ENCODE measurements at regions of chr6 and their contacts with region 1.

Region 1: DNA sequence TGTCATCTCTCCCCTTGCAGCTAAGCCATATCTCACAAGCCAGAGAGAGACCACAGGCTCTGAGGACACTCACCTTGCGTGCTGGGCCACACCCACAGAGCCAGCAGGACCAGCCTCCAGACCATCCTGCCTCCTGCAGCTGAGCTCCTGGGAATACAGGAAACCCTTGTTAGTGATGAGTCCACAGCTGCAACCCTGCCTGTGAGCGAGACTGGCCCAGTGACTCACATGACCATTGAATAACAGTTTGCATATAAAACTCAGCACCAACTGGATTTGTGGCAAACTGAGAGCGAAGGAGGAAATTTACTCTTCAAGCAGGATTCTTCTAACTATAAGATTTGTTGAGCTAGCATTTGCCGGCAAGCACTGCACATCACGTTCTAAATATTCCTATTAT is 3.0 kb downstream of the THBS2 start:
- DNase-seq: peak; percentile 59 to 93 (median 82)

Region 2: GRCh38 chr6:169162752-169163591 is 87.7 kb before region 1 on chr6:
- intact Hi-C with region 1: no loop called
- DNase-seq: peak in 4 of 42 donors; percentile 10 to 30 (median 14)

Region 3: GRCh38 chr6:169212897-169213813 is 37.5 kb before region 1 on chr6:
- intact Hi-C with region 1: loop called (anchors 2 kb)
- DNase-seq: peak; percentile 81 to 98 (median 94)

Region 4: DNA sequence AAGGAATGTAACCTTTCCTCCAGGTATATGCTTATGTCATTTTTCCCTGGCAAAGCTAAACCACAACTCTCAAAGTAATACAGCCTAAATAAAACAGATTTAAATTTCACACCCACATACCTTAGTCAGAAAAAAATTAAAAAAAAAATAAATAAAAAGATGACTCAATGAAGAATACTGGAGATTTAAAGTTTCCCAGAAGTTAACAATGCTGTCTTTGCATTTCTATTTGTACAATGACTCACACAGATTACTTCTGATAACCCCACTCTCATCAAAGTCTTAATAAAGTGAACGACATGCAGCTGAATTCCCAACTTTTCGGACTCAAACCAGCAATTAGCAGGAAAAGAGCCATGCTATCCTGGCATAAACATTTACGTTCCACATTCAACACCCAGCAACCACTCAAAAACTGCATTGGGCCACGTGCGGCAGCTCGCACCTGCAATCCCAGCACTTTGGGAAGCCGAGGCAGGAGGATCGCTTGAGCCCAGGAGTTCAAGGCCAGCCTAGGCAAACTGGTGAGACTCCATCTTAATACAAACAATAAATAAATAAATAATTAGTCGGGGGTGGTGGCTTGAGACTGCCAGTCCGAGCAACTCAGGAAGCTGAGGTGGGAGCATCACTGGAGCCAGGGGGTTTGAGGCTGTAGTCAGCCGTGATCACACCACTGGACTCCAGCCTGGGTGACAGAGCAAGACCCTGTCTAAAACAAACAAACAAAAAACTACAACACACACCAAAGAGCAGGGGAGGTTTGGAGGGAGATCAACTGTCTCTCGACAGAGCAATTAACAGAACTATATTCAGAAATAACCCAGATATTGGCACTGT is 320.7 kb after region 1 on chr6:
- intact Hi-C with region 1: no loop called
- DNase-seq: no peak